ENCODE measurements at regions of chr12 and their contacts with region 1.

Region 1: DNA sequence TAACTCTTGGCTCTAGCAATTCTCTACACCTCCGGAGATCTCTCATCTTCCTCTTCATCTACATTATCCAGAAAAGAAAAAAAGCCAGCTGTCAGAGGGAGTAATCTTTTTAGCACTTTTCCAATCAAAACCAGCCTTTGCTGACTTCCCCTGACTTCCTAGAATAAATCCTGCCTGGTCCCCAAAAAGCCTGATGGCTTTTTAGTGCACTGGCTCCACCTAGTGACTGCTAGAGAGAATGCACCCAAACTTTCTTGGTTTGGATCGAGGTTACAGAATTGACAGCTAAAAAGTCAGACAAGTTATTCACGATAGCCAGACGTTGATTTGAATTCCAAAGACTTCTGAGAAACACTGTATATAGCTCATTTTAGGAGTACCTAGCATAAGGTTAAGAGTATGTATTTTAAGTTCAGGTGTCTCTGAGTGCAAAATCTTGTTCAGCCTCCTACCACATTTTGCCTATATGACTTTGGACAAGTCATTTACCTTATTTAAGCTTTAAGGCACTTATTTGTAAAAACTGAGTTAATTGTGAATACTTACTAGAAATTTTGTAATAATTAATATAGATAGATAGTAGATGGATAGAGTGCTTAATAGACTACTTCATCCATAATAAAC is 185.7 kb upstream of the GRIN2B start:
- DNase-seq: no peak
- ATAC-seq: peak in 1 of 2 donors; percentile 39
- H3K4me3 ChIP-seq: no peak overlapping the region
- H3K27ac ChIP-seq: no peak overlapping the region
- H3K4me1 ChIP-seq: no peaks in the 10 kb centered on the region
- H3K27me3 ChIP-seq: no peaks in the 10 kb centered on the region

Region 2: GRCh38 chr12:13734584-13735152 is 432.4 kb before region 1 on chr12:
- intact Hi-C with region 1: loop called in 2 of 4 experiments (anchors 5 kb)
- DNase-seq: no peak
- ATAC-seq: no peak
- H3K4me3 ChIP-seq: no peak overlapping the region
- H3K27ac ChIP-seq: no peak overlapping the region
- H3K4me1 ChIP-seq: no peaks in the 10 kb centered on the region
- H3K27me3 ChIP-seq: no peaks in the 10 kb centered on the region

Region 3: GRCh38 chr12:13744561-13744960 is 422.6 kb before region 1 on chr12:
- intact Hi-C with region 1: loop called in 3 of 4 experiments (anchors 5 kb)
- DNase-seq: no peak
- ATAC-seq: no peak
- H3K4me3 ChIP-seq: no peak overlapping the region
- H3K27ac ChIP-seq: no peak overlapping the region
- H3K4me1 ChIP-seq: no peaks in the 10 kb centered on the region
- H3K27me3 ChIP-seq: no peaks in the 10 kb centered on the region

Region 4: GRCh38 chr12:13864081-13864673 is 302.9 kb before region 1 on chr12:
- intact Hi-C with region 1: loop called (anchors 5 to 10 kb)
- DNase-seq: peak; percentile 82 to 86 (median 83)
- ATAC-seq: peak; percentile 72 to 89
- H3K4me3 ChIP-seq: no peak overlapping the region
- H3K27ac ChIP-seq: no peak overlapping the region
- H3K4me1 ChIP-seq: no peaks in the 10 kb centered on the region
- H3K27me3 ChIP-seq: peaks cover 2% of the 10 kb centered on the region

Region 5: DNA sequence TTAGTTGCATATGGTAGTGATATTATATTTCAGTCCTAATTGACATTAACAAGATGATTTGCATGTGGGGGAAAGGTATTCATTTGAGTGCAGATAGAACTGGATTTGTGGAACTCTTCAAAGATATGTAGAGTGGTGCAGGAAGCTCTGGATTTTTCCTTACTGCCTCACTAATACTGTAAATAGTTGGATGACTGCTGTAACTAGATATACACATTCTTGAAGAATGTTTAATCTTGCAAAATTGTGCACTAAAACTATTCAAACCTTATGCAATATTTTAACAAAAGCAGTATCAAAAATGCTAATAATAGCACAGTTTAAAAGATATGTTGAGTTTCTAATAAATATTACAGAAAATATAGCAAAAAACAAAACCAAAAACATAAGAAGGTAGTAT is 155.3 kb after region 1 on chr12:
- intact Hi-C with region 1: no loop called
- DNase-seq: no peak
- ATAC-seq: no peak
- H3K4me3 ChIP-seq: no peak overlapping the region
- H3K27ac ChIP-seq: no peak overlapping the region
- H3K4me1 ChIP-seq: no peaks in the 10 kb centered on the region
- H3K27me3 ChIP-seq: no peaks in the 10 kb centered on the region